Ovary (tissue), 10 donors: ENCODE measurements at regions of chr5 and their contacts with region 1.

Region 1: GRCh38 chr5:179550511-179551230 is at the start of gene RUFY1:
- DNase-seq: peak; percentile 79 to 88 (median 82)
- H3K4me3 ChIP-seq: peak within 1 kb of the TSS; percentile 71
- H3K27ac ChIP-seq: peak within 1 kb of the TSS; percentile 67 to 91
- H3K4me1 ChIP-seq: peaks cover 4% of the 10 kb centered on the region
- H3K27me3 ChIP-seq: no peaks in the 10 kb centered on the region
- CTCF ChIP-seq: peak in 2 of 3 donors; percentile 38 to 41
- EP300 ChIP-seq: no peak
- POLR2A ChIP-seq: peak; percentile 68
- total RNA-seq, gene RUFY1: 35.6 to 47.2 (median 39.1) TPM

Region 2: DNA sequence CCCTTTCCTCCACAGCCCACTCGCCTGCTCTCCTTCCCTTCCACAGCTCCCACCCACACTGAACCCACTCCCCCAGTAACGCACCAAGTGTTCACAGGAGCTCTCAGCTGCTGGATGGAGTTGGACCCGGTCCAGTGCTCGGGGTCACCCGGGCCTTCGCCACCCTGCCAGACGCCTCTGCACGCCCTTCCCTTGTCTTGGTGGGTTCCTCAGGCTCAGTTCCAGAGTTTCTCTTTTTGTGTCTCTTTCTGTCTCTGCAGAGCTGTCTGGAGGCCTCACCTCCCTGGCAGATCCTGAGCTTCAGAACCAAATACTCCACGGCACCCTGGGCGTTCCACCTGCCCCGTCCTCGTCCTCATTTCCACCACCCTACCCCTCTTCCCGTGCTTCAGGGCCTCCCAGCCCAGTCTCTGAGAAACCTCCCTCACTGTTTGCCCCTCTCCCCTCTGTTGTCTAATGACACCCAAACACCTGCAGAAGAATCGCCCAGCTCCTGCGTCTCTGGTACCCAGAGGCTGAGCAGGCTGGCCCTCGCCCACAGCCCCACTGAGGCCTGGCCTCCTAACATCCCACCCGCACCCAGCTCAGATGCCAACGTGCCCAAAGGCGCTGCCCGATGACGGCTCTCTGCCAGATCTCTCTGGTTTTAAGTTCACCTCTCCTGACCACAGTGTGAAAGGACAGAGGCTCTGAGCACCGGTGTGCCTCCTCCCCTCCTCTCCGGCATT is 1034.7 kb before region 1 on chr5:
- intact Hi-C with region 1: no loop called
- DNase-seq: no peak
- H3K4me3 ChIP-seq: no peak overlapping the region
- H3K27ac ChIP-seq: no peak overlapping the region
- H3K4me1 ChIP-seq: no peaks in the 10 kb centered on the region
- H3K27me3 ChIP-seq: no peaks in the 10 kb centered on the region
- CTCF ChIP-seq: no peak
- EP300 ChIP-seq: no peak
- POLR2A ChIP-seq: no peak

Region 3: DNA sequence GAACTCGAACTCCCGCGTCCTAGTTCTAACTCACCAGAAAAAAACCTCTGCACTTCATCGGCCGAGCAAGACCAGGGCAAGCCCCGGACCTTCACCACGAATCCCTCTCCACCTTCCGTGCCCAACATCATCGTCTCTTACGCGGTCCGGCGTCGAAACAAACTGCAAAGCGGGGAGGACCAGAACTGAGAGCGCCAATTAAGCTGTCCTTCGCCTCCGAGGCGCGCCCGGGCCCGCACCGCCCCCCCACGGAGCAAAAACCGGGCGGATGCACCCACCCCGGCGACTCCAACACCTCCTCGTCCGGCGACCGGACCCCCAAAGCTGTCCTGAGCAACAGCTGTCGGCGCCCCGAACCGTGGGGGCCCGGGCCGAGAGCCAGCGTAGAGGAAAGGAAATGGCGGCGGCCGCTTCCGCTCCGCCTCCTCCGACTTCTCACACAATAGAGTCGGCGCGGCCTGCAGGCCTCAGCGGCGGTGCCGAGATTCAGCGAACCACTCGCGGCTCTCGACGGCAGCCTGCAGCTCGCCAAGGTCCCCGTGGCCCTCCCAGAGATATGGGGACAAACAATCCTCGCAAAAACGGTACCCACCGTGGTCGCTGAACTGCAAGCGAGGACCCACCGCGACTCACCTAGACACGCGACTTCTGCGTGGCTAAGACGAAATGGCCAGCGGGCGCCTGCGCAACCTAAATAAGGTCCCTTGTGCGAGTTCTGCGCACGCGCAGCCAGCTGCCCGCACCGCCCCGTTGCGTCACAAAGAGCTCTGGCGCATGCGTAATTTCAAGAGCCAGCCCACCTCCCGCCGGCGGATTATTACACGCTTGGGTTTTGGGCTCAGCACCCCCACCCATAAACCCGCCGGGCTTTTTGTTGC is 72.6 kb after region 1 on chr5 and contains the start of gene HNRNPH1:
- intact Hi-C with region 1: loop called in 2 of 4 experiments (anchors 5 to 10 kb)
- DNase-seq: peak; percentile 99 to 100 (median 99)
- H3K4me3 ChIP-seq: peak within 1 kb of the TSS; percentile 100
- H3K27ac ChIP-seq: peak within 1 kb of the TSS; percentile 95 to 99
- H3K4me1 ChIP-seq: peaks cover 7% of the 10 kb centered on the region
- H3K27me3 ChIP-seq: no peaks in the 10 kb centered on the region
- CTCF ChIP-seq: peak in 2 of 3 donors; percentile 13 to 22
- EP300 ChIP-seq: no peak
- POLR2A ChIP-seq: peak; percentile 100
- total RNA-seq, gene HNRNPH1: 416 to 679 (median 577) TPM